ENCODE measurements at regions of chr16 and their contacts with region 1.

Region 1: GRCh38 chr16:10918294-10919002 is 23.8 kb downstream of the DEXI start:
- DNase-seq: peak; percentile 87 to 94 (median 89)
- ATAC-seq: peak; percentile 73 to 80 (median 75)
- H3K4me3 ChIP-seq: peak overlapping the region in 1 of 3 donors; percentile 10
- H3K27ac ChIP-seq: peak overlapping the region in 1 of 3 donors; percentile 27
- H3K4me1 ChIP-seq: peaks cover 0 to 38% (median 17%) of the 10 kb centered on the region in 4 donors
- H3K27me3 ChIP-seq: no peaks in the 10 kb centered on the region
- CTCF ChIP-seq: peak; percentile 95 to 97 (median 96)
- POLR2A ChIP-seq: no peak

Region 2: GRCh38 chr16:10737068-10737625 is 181.3 kb before region 1 on chr16:
- intact Hi-C with region 1: loop called in 1 of 2 experiments (anchors 5 kb)
- DNase-seq: peak in 1 of 3 donors; percentile 78
- ATAC-seq: peak; percentile 71 to 83 (median 76)
- H3K4me3 ChIP-seq: peak overlapping the region; percentile 26 to 32 (median 31)
- H3K27ac ChIP-seq: peak overlapping the region; percentile 74 to 90 (median 83)
- H3K4me1 ChIP-seq: peaks cover 0 to 26% (median 11%) of the 10 kb centered on the region in 4 donors
- H3K27me3 ChIP-seq: no peaks in the 10 kb centered on the region
- CTCF ChIP-seq: peak; percentile 90 to 98 (median 94)
- POLR2A ChIP-seq: no peak

Region 3: GRCh38 chr16:10765772-10766171 is 152.7 kb before region 1 on chr16:
- intact Hi-C with region 1: loop called in 1 of 2 experiments (anchors 10 kb)
- DNase-seq: no peak
- ATAC-seq: no peak
- H3K4me3 ChIP-seq: no peak overlapping the region
- H3K27ac ChIP-seq: no peak overlapping the region
- H3K4me1 ChIP-seq: no peaks in the 10 kb centered on the region
- H3K27me3 ChIP-seq: no peaks in the 10 kb centered on the region
- CTCF ChIP-seq: no peak
- POLR2A ChIP-seq: no peak

Measured in right lobe of liver (tissue), 6 donors.